Aorta (tissue), 5 donors: ENCODE measurements at regions of chr11 and their contacts with region 1.

Region 1: GRCh38 chr11:56932572-56933220 is 56.0 kb upstream of the OR5AK2 start:
- DNase-seq: no peak
- ATAC-seq: no peak
- H3K4me3 ChIP-seq: no peak overlapping the region
- H3K27ac ChIP-seq: no peak overlapping the region
- H3K4me1 ChIP-seq: no peaks in the 10 kb centered on the region
- H3K27me3 ChIP-seq: peaks cover 0 to 2% of the 10 kb centered on the region in 2 donors

Region 2: GRCh38 chr11:56740107-56740506 is 192.6 kb before region 1 on chr11:
- intact Hi-C with region 1: no loop called
- DNase-seq: no peak
- ATAC-seq: no peak
- H3K4me3 ChIP-seq: no peak overlapping the region
- H3K27ac ChIP-seq: no peak overlapping the region
- H3K4me1 ChIP-seq: no peaks in the 10 kb centered on the region
- H3K27me3 ChIP-seq: no peaks in the 10 kb centered on the region

Region 3: DNA sequence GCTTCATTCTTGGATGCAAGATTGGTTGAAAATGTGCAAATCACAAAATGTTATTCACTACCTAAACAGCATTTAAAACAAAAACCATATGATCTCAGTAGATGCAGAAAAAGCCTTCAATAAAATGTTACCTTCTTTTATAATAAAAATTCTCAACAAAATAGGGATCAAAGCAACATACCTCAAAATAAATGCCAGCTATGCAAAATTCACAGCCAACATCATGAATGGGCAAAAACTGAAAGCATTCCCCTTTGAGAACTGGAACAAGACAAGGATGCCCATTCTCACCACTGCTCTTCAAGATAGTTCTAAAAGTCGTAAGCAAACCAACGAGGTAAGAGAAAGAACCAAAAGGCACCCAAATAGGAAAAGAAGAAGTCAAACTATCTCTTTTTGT is 58.0 kb after region 1 on chr11:
- intact Hi-C with region 1: loop called in 1 of 2 experiments (anchors 10 kb)
- DNase-seq: no peak
- ATAC-seq: no peak
- H3K4me3 ChIP-seq: no peak overlapping the region
- H3K27ac ChIP-seq: no peak overlapping the region
- H3K4me1 ChIP-seq: no peaks in the 10 kb centered on the region
- H3K27me3 ChIP-seq: no peaks in the 10 kb centered on the region